Posterior cingulate gyrus (tissue), 11 donors: ENCODE measurements at regions of chr3 and their contacts with region 1.

Region 1: GRCh38 chr3:185356499-185356898 is 6.4 kb upstream of the MAP3K13 start:
- DNase-seq: no peak

Region 2: DNA sequence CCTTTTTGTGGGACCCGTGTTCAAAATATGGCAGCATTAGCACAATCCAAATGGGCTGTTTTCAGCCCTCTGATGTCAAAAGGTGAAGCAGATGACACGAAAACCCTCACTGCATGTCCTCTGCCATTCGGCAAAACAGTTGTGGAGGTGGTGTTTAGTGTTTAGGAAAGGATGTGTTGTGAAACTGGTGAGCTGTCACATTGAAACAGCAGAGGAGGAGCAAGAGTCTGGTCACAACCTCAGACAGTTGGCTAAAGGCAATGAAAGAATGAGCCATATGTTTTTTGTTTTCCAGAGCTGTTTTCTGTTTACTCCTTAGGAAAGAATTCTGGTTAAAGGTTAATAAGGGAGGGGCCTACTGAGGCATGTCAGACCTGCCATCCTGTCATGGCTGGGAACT is 403.8 kb before region 1 on chr3:
- intact Hi-C with region 1: no loop called
- DNase-seq: no peak

Region 3: DNA sequence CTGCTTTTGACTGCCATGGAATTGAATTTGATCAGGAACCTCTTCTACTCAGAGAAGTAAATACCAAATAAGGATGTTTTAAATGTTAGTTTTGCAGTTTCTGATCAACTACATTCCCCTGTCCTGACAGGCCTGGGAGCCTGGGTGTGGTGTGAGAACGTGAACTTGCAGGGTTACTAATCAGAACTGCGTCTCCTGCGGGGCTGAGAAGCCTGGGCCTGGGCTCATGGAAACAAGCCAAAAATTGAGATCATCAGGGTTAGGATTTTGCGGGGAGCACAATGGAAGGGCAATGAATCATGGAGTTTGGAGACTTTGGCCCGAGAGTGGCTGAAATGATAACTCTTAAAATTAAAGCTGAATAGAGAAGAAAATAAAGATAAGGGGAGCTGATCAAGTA is 155.9 kb before region 1 on chr3:
- intact Hi-C with region 1: no loop called
- DNase-seq: no peak

Region 4: DNA sequence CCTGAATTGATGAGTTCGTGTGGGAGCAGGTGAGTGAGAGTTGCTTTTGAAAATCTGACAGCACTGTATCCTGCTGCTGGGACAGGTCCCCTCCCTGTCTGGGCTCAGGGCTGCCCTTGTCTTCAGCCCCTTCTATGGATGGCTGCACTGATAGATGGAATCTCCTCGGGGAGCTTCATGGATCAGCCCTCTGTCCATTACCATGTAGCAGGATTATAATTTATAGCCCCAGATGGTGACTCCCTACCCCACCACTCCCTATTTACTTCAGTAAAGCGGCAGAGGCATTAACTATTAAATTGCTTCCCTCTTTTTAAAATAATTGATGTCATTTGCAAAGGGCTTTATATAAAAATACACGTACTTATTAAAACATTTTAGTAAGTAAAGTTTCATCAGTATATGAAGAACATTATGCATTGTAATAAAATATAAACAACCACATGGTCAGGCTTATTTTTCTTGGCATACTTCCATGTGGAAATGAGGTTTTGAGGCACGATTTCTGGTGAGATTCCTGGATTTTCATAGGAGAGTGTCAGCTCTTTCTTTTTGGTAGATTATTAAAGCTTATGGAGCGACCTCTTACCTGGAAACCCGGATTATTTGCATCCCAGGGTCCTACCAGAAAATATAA is 44.9 kb after region 1 on chr3:
- intact Hi-C with region 1: no loop called
- DNase-seq: no peak

Region 5: GRCh38 chr3:185473290-185473815 is 116.9 kb after region 1 on chr3:
- intact Hi-C with region 1: no loop called
- DNase-seq: peak in 7 of 10 donors; percentile 40 to 90 (median 74)

Region 6: GRCh38 chr3:185558395-185558794 is 201.9 kb after region 1 on chr3:
- intact Hi-C with region 1: loop called (anchors 5 kb)
- DNase-seq: no peak